ENCODE measurements at regions of chr9 and their contacts with region 1.

Region 1: DNA sequence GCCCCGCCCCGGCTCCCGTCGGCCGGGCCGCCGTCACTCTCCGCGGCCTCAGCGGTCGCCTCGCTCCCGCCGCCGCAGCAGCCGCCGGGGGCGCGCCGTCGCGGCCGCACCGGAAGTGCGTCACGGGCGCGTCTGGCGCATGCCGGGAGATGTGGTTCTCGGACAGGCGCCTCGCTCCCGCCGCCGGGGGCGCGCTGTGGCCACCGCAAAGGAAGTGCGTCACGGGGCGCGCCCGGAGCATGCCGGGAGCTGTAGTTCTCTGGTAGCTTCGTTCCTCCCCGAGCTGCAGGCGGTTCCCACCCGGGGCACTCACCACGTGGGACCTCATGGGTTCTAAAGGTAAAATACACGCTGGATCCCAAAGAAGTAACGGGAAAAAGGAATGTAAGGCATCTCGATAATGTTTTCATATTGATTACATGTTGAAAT is at the start of gene UBAC1:
- DNase-seq: peak; percentile 91 to 96
- H3K4me3 ChIP-seq: peak within 1 kb of the TSS; percentile 88
- H3K4me1 ChIP-seq: peaks cover 6% of the 10 kb centered on the region; the same call in 1 of the 2 replicates
- H3K27me3 ChIP-seq: no peaks in the 10 kb centered on the region

Region 2: GRCh38 chr9:135714242-135715055 is 246.8 kb before region 1 on chr9:
- in situ Hi-C with region 1: no loop called
- DNase-seq: peak in 1 of 2 experiments; percentile 26
- H3K4me3 ChIP-seq: no peak overlapping the region
- H3K4me1 ChIP-seq: no peaks in the 10 kb centered on the region
- H3K27me3 ChIP-seq: peaks cover 35% of the 10 kb centered on the region

Region 3: GRCh38 chr9:136109351-136110081 is 148.2 kb after region 1 on chr9:
- in situ Hi-C with region 1: loop called (anchors 5 kb)
- DNase-seq: peak; percentile 79 to 93
- H3K4me3 ChIP-seq: peak overlapping the region; percentile 24
- H3K4me1 ChIP-seq: peaks cover 24% of the 10 kb centered on the region
- H3K27me3 ChIP-seq: no peaks in the 10 kb centered on the region